ENCODE measurements at regions of chrX and their contacts with region 1.

Region 1: DNA sequence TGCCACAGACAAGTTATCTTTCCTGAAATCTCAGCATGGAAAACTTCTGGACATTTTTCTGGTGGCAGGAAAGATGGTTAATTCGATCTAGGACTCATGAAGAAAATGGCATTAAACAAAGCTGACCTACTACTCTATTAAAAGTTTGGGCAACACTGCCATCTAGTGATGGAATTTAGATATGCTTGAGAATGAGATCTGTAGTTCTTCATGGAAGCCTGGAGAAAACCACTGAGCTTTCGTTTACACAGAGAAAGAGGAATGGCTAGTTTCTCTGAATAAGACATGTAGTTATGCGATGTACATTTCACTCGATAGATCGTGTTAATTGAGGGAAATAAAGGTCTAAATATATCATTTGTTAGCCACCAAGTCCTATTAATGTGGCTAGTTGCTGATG is 51.7 kb upstream of the CHRDL1 start:
- DNase-seq: peak; percentile 70
- H3K4me3 Mint-ChIP-seq: no peak overlapping the region
- H3K27ac Mint-ChIP-seq: no peak overlapping the region
- H3K4me1 Mint-ChIP-seq: peaks cover 2% of the 10 kb centered on the region
- H3K27me3 Mint-ChIP-seq: no peaks in the 10 kb centered on the region

Region 2: DNA sequence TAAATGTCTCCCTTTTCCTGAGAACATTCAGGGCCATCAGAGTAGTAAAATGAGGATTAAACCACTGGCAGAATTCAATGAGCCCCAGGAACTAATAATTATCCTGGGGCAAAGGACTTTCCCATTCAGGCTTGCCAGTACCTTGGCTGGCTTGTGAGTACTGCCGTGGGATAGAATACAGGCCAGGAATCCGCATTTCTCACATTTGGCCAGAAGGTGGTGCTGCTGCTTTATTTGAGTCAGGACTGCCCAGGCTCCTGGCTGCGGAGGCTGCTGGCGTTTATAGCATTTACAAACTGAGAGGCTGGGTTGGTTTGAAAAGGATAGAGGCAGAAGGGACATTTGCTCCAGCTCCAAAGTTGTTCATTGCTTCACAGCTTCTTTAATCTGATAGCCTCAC is 397.3 kb before region 1 on chrX:
- intact Hi-C with region 1: loop called (anchors 1 kb)
- DNase-seq: peak; percentile 83
- H3K4me3 Mint-ChIP-seq: no peak overlapping the region
- H3K27ac Mint-ChIP-seq: no peak overlapping the region
- H3K4me1 Mint-ChIP-seq: no peaks in the 10 kb centered on the region
- H3K27me3 Mint-ChIP-seq: peaks cover 4% of the 10 kb centered on the region

Measured in activated CD4-positive, alpha-beta T cell treated with anti-CD3 and anti-CD28 coated beads, Interleukin-2, amount 10 ng/mL, durations not matched to agents 24 days and 14 days (primary cell).